Activated CD8-positive, alpha-beta T cell treated with anti-CD3 and anti-CD28 coated beads for 36 hours (primary cell): ENCODE measurements at regions of chr3 and their contacts with region 1.

Region 1: DNA sequence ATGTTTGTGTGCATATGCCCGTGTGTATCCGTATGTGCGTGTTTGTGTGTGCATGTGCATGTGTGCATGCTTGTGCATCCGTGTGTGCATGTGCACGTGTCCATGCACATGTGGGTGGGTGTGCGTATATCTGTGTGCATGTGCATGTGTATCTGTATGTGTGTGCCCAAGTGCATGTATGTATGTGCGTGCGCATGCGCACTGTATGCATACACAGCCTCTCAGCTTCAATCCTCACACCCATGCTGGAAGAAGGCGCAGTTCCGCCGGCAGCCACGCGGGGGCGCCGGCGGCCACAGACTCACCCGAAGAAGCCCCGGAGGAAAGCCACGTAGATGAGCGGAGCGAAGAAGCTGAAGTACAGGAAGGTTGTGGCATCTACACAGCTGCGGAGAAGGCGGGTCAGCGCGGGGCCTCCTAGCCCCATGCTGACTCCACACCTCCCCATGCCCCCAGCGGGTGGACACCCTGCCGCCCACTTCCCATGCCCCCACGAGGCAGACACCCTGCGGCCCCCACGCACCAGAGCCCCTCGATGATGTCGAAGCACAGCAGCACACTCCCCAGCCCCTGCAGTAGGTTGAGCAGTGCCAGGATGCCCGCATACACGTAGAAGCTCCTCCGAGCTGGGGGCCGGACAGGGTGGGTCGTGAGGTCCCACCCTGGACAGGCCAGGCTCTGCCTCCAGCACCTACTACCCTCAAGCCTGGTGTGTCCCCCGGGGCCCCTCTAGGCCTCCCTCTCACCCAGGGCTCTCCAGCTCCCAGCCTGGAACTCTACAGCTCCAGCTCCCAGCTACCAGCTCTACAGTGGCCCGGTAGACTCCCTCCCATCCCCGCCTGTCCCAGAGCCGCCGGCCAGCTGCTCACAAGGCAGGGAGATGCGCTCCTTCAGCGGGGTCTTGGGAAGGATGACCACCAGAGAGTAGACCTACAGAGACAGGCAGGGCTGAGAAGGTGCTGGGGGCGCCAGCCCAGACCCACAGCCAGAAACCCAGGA is 15.4 kb downstream of the TPRA1 start:
- DNase-seq: peak; percentile 89
- ATAC-seq: peak; percentile 98
- H3K4me3 Mint-ChIP-seq: no peak overlapping the region
- H3K27ac Mint-ChIP-seq: no peak overlapping the region
- H3K4me1 Mint-ChIP-seq: peaks cover 14% of the 10 kb centered on the region
- H3K27me3 Mint-ChIP-seq: no peaks in the 10 kb centered on the region
- CTCF ChIP-seq: peak; percentile 86

Region 2: GRCh38 chr3:127518456-127519081 is 56.6 kb before region 1 on chr3:
- CTCF ChIA-PET with region 1: no interaction called
- POLR2A ChIA-PET with region 1: no interaction called
- intact Hi-C with region 1: no loop called
- DNase-seq: no peak
- ATAC-seq: no peak
- H3K4me3 Mint-ChIP-seq: no peak overlapping the region
- H3K27ac Mint-ChIP-seq: no peak overlapping the region
- H3K4me1 Mint-ChIP-seq: no peaks in the 10 kb centered on the region
- H3K27me3 Mint-ChIP-seq: peaks cover 6% of the 10 kb centered on the region
- CTCF ChIP-seq: no peak

Region 3: DNA sequence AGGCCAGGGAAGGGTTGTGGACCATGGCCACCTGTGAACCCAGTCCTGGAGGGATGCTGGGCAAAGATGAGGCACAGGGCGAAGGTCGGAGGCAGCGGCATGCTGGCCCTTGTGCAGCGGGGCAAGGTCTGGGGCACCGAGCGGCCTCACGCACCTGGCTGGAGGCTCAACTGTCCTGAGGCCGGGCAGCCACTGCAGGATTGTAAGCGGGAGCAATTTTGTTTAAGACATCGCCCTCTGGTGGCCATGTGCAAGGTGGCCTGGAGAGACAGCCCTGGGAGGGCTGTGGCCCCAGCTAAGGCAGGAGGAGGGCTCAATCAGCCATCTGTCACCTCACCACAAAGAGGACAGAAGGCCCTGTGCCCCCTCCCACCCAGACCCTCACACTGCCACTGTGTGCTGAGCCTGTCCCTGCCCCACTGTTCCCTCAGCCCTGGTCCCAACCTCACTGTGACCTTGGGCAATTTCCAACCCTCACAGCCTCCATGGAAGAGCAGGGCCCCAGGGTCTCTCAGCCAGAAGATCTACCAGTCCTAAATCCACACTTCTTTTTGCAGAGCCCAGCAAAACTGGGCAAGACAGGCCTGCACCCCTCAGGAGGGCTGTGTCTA is 30.9 kb before region 1 on chr3:
- CTCF ChIA-PET with region 1: interaction called, 18 read pairs
- POLR2A ChIA-PET with region 1: no interaction called
- intact Hi-C with region 1: no loop called
- DNase-seq: peak; percentile 83
- ATAC-seq: peak; percentile 45
- H3K4me3 Mint-ChIP-seq: no peak overlapping the region
- H3K27ac Mint-ChIP-seq: no peak overlapping the region
- H3K4me1 Mint-ChIP-seq: peaks cover 5% of the 10 kb centered on the region
- H3K27me3 Mint-ChIP-seq: no peaks in the 10 kb centered on the region
- CTCF ChIP-seq: peak; percentile 81

Region 4: GRCh38 chr3:127590593-127591477 is 15.7 kb after region 1 on chr3 and contains the start of gene TPRA1:
- CTCF ChIA-PET with region 1: interaction called, 86 read pairs
- POLR2A ChIA-PET with region 1: interaction called, 5 read pairs
- intact Hi-C with region 1: no loop called
- DNase-seq: peak; percentile 86
- ATAC-seq: peak; percentile 85
- H3K4me3 Mint-ChIP-seq: peak within 1 kb of the TSS; percentile 83
- H3K27ac Mint-ChIP-seq: peak within 1 kb of the TSS; percentile 93
- H3K4me1 Mint-ChIP-seq: peaks cover 20% of the 10 kb centered on the region
- H3K27me3 Mint-ChIP-seq: no peaks in the 10 kb centered on the region
- CTCF ChIP-seq: no peak
- total RNA-seq, gene TPRA1: 26.6 to 28.0 TPM

Region 5: GRCh38 chr3:127612966-127613365 is 37.8 kb after region 1 on chr3:
- CTCF ChIA-PET with region 1: interaction called, 11 read pairs
- POLR2A ChIA-PET with region 1: no interaction called
- intact Hi-C with region 1: no loop called
- DNase-seq: no peak
- ATAC-seq: no peak
- H3K4me3 Mint-ChIP-seq: no peak overlapping the region
- H3K27ac Mint-ChIP-seq: no peak overlapping the region
- H3K4me1 Mint-ChIP-seq: peaks cover 10% of the 10 kb centered on the region
- H3K27me3 Mint-ChIP-seq: no peaks in the 10 kb centered on the region
- CTCF ChIP-seq: no peak

Region 6: GRCh38 chr3:127628788-127629466 is 53.7 kb after region 1 on chr3 and contains the start of gene PODXL2:
- CTCF ChIA-PET with region 1: interaction called, 15 read pairs
- POLR2A ChIA-PET with region 1: no interaction called
- intact Hi-C with region 1: no loop called
- DNase-seq: peak; percentile 26
- ATAC-seq: peak; percentile 47
- H3K4me3 Mint-ChIP-seq: peak within 1 kb of the TSS; percentile 65
- H3K27ac Mint-ChIP-seq: no peak within 1 kb of the TSS
- H3K4me1 Mint-ChIP-seq: peaks cover 30% of the 10 kb centered on the region
- H3K27me3 Mint-ChIP-seq: peaks cover 30% of the 10 kb centered on the region
- CTCF ChIP-seq: no peak
- total RNA-seq, gene PODXL2: 1.1 to 1.3 TPM

Region 7: DNA sequence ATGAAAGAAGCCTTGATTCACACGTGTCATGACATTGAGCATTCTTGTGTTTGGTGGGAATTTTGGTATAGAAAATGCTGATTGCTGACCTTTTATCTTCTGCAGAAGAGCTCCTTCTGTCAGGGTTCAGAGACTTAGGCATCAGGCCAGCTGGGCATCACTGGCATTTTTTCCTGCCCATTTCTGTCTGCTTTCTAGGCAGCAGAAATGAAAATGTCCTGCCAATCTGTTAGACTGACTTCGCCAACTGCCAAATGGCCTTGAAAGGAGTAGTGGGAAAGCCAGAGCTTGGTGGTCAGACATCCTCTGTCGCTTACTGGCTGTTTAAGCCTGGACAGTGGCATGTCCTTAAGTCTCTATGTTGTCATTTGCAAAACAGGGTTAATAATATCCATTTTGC is 635.5 kb after region 1 on chr3:
- CTCF ChIA-PET with region 1: no interaction called
- POLR2A ChIA-PET with region 1: no interaction called
- intact Hi-C with region 1: no loop called
- DNase-seq: no peak
- ATAC-seq: no peak
- H3K4me3 Mint-ChIP-seq: no peak overlapping the region
- H3K27ac Mint-ChIP-seq: no peak overlapping the region
- H3K4me1 Mint-ChIP-seq: peaks cover 2% of the 10 kb centered on the region
- H3K27me3 Mint-ChIP-seq: no peaks in the 10 kb centered on the region
- CTCF ChIP-seq: no peak